ENCODE measurements at regions of chr2 and their contacts with region 1.

Region 1: GRCh38 chr2:27823569-27823968 is 52.0 kb downstream of the MRPL33 start:
- DNase-seq: no peak
- H3K4me3 ChIP-seq: no peak overlapping the region
- H3K27ac ChIP-seq: no peak overlapping the region
- H3K4me1 ChIP-seq: no peaks in the 10 kb centered on the region
- H3K27me3 ChIP-seq: no peaks in the 10 kb centered on the region
- CTCF ChIP-seq: no peak
- EP300 ChIP-seq: no peak
- POLR2A ChIP-seq: no peak

Region 2: DNA sequence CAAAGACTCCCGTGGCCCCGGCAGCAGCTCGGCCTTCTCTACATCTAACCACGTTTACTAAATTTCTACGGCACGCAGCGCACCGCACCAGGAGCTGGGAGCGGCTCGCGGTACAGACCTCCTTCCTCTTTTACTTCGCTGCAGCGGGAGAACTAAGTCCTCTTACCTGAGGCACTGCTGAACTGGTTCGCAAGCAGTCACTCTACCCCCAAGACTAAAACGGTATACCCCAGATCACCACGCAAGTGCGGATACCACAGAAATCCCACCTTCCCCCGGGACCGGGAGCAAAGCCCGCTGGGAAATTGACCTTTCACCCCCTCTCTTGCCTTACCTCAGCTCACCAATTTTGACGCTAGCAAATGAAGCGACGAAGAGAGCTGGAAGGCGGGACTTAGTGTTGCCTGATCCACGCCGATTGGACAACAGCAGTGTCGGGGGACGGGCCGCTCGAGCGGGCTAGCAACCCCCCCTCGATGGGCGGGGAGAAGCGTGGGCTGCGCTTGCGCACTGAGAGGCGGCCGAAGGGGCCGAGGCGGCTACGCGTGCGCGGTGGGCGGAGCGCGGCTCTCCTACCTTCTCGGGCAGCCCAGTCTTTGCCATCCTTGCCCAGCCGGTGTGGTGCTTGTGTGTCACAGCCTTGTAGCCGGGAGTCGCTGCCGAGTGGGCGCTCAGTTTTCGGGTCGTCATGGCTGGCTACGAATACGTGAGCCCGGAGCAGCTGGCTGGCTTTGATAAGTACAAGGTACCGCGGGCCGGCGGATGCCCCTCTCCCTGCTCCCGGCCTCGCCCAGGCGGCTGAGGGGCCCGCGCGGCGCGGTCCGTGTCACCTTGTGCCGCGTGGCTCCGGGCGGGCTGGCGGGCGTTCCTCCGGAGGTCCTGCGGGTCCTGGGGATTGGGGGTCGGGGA is 1477.8 kb before region 1 on chr2 and contains the start of gene SELENOI:
- in situ Hi-C with region 1: no loop called
- intact Hi-C with region 1: no loop called
- DNase-seq: peak; percentile 99
- H3K4me3 ChIP-seq: peak within 1 kb of the TSS; percentile 83 to 91 (median 90)
- H3K27ac ChIP-seq: peak within 1 kb of the TSS; percentile 94 to 98 (median 98)
- H3K4me1 ChIP-seq: peaks cover 21 to 33% (median 23%) of the 10 kb centered on the region in 4 donors
- H3K27me3 ChIP-seq: no peaks in the 10 kb centered on the region
- CTCF ChIP-seq: no peak
- EP300 ChIP-seq: no peak
- POLR2A ChIP-seq: peak; percentile 95
- total RNA-seq, gene SELENOI: 12.1 to 37.4 (median 26.9) TPM

Region 3: GRCh38 chr2:27871802-27872201 is 48.2 kb after region 1 on chr2:
- in situ Hi-C with region 1: no loop called
- intact Hi-C with region 1: loop called (anchors 10 kb)
- DNase-seq: no peak
- H3K4me3 ChIP-seq: no peak overlapping the region
- H3K27ac ChIP-seq: no peak overlapping the region
- H3K4me1 ChIP-seq: no peaks in the 10 kb centered on the region
- H3K27me3 ChIP-seq: no peaks in the 10 kb centered on the region
- CTCF ChIP-seq: no peak
- EP300 ChIP-seq: no peak
- POLR2A ChIP-seq: no peak